Activated CD4-positive, alpha-beta T cell treated with anti-CD3 and anti-CD28 coated beads, Interleukin-2, amount 10 ng/mL, durations not matched to agents 24 days and 14 days (primary cell): ENCODE measurements at regions of chr1 and their contacts with region 1.

Region 1: GRCh38 chr1:153510984-153511410 is 24.8 kb downstream of the S100A6 start:
- DNase-seq: peak; percentile 94
- H3K4me3 Mint-ChIP-seq: no peak overlapping the region
- H3K27ac Mint-ChIP-seq: peak overlapping the region; percentile 80
- H3K4me1 Mint-ChIP-seq: peaks cover 21% of the 10 kb centered on the region
- H3K27me3 Mint-ChIP-seq: no peaks in the 10 kb centered on the region

Region 2: GRCh38 chr1:153415850-153416570 is 95.0 kb before region 1 on chr1 and contains the start of gene S100A7A:
- intact Hi-C with region 1: no loop called
- DNase-seq: no peak
- H3K4me3 Mint-ChIP-seq: no peak within 1 kb of the TSS
- H3K27ac Mint-ChIP-seq: no peak within 1 kb of the TSS
- H3K4me1 Mint-ChIP-seq: no peaks in the 10 kb centered on the region
- H3K27me3 Mint-ChIP-seq: peaks cover 4% of the 10 kb centered on the region
- total RNA-seq, gene S100A7A: not detected in 2 replicates

Region 3: DNA sequence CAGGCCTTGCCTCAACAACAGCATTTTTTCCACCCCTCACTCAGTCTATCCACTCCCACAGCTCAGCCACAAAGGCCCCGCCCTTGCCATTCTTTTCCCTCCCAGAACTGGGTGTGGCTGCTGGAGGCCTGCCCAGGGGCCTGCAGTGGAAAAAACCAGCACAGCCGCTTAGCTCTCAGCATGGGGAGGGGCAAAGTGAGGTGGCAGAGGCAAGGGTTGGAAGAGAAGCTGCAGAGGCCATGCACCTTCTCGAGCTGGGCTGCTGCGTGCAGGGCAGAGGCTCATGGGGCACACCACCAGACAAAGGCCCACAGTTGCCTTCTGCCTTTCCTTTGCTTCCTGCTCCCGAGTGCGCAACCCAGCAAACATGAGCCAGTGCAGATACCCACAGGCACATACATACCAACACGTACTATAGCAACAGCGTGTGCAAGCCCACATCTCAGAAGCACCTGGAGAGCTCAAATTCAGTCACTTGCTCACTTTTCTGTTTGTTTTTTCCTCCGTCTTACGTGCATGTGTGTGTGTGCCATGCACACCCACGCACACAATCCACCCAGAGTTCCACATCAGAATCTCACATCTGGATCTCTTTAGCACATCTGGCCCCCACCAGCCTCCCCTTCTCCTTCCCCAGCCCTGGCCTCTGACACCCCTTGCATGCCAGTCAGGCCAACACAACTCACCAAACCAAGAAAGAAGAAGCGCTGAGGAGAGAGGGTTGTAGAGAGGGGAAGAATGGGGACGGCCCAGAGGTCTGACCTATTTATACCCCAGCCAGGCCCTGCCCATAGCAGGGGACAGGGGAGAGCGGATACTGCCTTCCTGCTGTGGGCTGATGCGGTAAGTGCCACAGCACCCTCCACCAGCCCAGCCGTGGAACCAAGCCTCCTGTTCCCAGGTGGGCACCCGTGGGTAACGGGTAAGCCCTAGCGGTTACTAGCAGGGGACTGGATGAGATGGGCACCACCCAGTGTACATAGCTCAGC is 34.4 kb after region 1 on chr1 and contains the start of gene S100A4:
- intact Hi-C with region 1: no loop called
- DNase-seq: peak; percentile 99
- H3K4me3 Mint-ChIP-seq: peak within 1 kb of the TSS; percentile 95
- H3K27ac Mint-ChIP-seq: peak within 1 kb of the TSS; percentile 99
- H3K4me1 Mint-ChIP-seq: peaks cover 76% of the 10 kb centered on the region
- H3K27me3 Mint-ChIP-seq: no peaks in the 10 kb centered on the region
- total RNA-seq, gene S100A4: 132 and 134 TPM in 2 replicates

Region 4: GRCh38 chr1:153561466-153561985 is 50.5 kb after region 1 on chr1:
- intact Hi-C with region 1: no loop called
- DNase-seq: no peak
- H3K4me3 Mint-ChIP-seq: no peak overlapping the region
- H3K27ac Mint-ChIP-seq: no peak overlapping the region
- H3K4me1 Mint-ChIP-seq: peaks cover 12% of the 10 kb centered on the region
- H3K27me3 Mint-ChIP-seq: no peaks in the 10 kb centered on the region

Region 5: DNA sequence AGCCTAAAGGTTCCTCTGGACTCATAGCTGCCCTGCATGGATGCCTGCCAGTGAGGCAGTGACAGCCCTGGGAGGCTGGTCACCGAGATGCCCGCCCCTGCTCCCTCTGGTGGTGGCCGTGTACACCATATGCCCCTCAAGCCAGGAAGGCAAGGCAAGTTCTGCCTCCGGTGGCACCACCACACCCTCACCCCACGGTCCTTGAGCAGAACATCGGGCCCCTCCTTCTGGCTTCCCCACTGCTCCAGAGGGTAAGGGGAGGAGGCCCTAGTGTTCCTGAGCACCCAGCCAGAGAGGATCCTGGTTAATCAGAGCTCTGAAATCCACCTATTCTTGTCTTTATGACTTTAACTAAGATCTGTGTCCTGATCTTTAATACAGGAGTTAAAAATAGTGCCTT is 106.7 kb after region 1 on chr1:
- intact Hi-C with region 1: loop called (anchors 1 kb)
- DNase-seq: peak; percentile 93
- H3K4me3 Mint-ChIP-seq: no peak overlapping the region
- H3K27ac Mint-ChIP-seq: no peak overlapping the region
- H3K4me1 Mint-ChIP-seq: peaks cover 8% of the 10 kb centered on the region
- H3K27me3 Mint-ChIP-seq: no peaks in the 10 kb centered on the region

Region 6: DNA sequence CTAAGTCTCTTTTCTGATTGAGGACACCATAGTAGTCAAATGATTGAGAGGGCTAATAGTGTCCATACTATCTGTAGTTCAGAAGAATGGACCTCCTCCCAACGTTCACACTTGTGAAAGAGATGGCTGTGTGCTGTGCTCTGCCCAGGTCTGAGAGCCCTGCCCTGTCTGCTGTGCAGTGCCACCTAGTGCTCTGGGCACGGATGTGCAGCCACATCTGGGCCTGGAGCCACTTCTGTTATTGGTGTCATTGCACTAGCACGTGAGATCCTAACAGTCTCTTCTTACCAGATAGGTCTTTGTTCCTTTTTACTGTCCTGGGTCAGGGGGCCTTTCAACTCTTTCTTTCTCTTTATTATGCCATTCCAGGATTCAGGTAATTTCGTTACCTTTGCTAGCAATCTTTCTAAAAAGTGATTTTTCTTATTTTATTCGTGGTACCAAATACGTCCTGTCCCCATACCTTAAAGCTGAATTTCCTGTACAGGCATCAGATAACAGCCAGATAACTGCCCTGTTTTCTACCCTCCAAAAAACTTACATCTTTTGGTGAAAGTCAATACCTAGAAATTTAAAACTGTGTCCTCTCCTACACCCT is 238.5 kb after region 1 on chr1:
- intact Hi-C with region 1: loop called (anchors 2 kb)
- DNase-seq: peak; percentile 94
- H3K4me3 Mint-ChIP-seq: no peak overlapping the region
- H3K27ac Mint-ChIP-seq: no peak overlapping the region
- H3K4me1 Mint-ChIP-seq: peaks cover 6% of the 10 kb centered on the region
- H3K27me3 Mint-ChIP-seq: no peaks in the 10 kb centered on the region